ENCODE measurements at regions of chr2 and their contacts with region 1.

Region 1: GRCh38 chr2:222057347-222058073 is 241.3 kb downstream of the PAX3 start:
- DNase-seq: no peak
- H3K4me3 ChIP-seq: no peak overlapping the region
- H3K27ac ChIP-seq: no peak overlapping the region
- H3K4me1 ChIP-seq: no peaks in the 10 kb centered on the region
- H3K27me3 ChIP-seq: no peaks in the 10 kb centered on the region
- CTCF ChIP-seq: peak; percentile 49

Region 2: GRCh38 chr2:222127660-222128059 is 70.2 kb after region 1 on chr2:
- intact Hi-C with region 1: no loop called
- DNase-seq: no peak
- H3K4me3 ChIP-seq: no peak overlapping the region
- H3K27ac ChIP-seq: no peak overlapping the region
- H3K4me1 ChIP-seq: no peaks in the 10 kb centered on the region
- H3K27me3 ChIP-seq: no peaks in the 10 kb centered on the region
- CTCF ChIP-seq: no peak

Region 3: DNA sequence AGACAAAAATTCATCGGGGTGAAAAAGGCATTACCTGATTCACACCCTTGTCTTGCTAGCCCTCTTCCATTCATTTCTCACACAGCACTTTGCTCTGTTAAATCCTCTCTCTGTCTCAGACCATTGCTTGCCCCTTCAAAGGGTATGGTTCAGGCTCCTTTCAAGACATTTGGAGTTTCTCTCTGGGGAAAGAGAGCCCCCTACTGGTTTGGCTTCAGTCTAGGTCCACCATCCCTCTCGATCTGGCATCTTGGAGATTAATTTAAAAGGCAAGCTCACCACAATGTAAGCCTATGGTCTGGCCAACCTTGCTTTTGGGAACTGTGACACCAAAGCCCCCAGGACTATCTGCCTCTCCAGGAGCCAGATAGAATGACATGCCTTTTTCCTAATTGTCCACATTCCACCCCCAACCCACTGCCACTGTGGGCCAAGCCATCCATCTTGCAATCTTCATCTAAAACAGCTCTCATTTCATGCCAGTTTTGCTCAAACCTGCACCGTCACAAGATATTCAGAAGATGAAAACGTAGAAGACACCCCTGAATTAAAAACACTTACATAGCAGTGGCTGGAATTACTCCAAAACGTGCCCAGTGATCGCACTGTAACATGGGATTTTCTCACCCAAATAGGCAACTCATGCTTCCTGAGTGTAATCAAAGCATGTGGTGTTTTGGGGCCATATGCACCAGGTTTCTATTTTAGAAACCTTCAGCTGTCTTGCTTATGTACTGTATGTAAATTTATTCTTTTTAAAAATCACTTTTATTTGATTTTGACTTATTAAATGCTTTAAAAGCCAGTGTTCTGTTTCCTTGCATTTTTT is 504.5 kb after region 1 on chr2:
- intact Hi-C with region 1: loop called (anchors 10 kb)
- DNase-seq: peak; percentile 67
- H3K4me3 ChIP-seq: no peak overlapping the region
- H3K27ac ChIP-seq: no peak overlapping the region
- H3K4me1 ChIP-seq: no peaks in the 10 kb centered on the region
- H3K27me3 ChIP-seq: no peaks in the 10 kb centered on the region
- CTCF ChIP-seq: peak; percentile 58

Region 4: DNA sequence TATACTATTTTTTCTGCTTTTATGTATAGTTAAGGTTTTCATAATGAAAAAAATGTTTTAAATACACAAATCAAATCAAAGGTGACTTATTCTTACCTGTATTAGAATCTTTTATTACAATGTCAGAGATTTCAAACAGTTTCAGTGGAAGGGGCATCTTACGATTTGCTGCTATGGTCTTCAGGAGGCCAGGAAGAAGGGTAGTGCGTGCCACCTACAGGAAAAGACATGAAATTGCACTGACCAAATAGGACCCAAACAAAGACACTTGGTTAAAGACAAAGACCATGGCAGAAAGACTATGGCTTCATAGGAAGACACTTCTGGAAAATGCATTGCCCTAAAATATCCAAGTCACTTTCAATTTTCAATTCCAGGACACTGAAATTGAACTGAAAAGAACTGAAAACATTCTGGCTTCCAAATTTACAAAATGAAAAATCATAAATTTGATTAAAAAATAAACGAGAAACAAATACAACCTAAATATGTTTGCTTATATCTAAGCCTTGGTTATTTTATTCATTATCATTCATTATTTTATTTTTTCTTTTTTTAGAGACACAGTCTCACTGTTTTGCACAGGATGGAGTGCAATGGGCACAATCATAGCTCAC is 556.3 kb after region 1 on chr2:
- intact Hi-C with region 1: loop called (anchors 5 kb)
- DNase-seq: no peak
- H3K4me3 ChIP-seq: no peak overlapping the region
- H3K27ac ChIP-seq: no peak overlapping the region
- H3K4me1 ChIP-seq: no peaks in the 10 kb centered on the region
- H3K27me3 ChIP-seq: no peaks in the 10 kb centered on the region
- CTCF ChIP-seq: peak; percentile 52